ENCODE measurements at regions of chr1 and their contacts with region 1.

Region 1: DNA sequence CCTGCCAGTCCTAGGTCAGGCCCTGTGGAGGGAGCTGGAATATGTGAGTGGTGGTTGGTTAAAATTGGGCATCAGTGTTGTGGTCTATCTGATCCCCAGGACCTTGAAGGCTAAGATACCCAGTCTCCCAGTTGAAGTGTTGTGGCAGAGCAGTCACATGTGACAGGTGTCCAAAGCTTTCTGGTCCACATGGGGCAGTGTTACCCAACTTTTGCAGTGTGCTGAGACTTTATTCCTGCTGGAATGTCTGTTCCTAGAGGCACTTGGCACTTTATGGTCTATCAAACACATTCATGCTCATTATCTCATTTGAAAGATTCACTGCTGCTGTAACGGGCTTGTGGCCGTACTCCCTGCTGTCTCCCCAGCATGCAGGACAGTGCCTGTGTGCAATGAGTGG is 21.0 kb upstream of the LORICRIN start:
- DNase-seq: no peak
- H3K4me3 ChIP-seq: no peak overlapping the region
- H3K27ac ChIP-seq: no peak overlapping the region
- H3K4me1 ChIP-seq: peaks cover under 1 to 3% (median 2%) of the 10 kb centered on the region in 4 experiments
- H3K27me3 ChIP-seq: peaks cover 0 to 4% (median 0%) of the 10 kb centered on the region in 5 experiments

Region 2: GRCh38 chr1:153228491-153228890 is 10.0 kb before region 1 on chr1:
- CTCF ChIA-PET with region 1: interaction called, 12 read pairs
- POLR2A ChIA-PET with region 1: no interaction called
- DNase-seq: no peak
- H3K4me3 ChIP-seq: no peak overlapping the region
- H3K27ac ChIP-seq: no peak overlapping the region
- H3K4me1 ChIP-seq: peaks cover 7 to 22% (median 14%) of the 10 kb centered on the region in 4 experiments
- H3K27me3 ChIP-seq: peaks cover 0 to 2% (median 0%) of the 10 kb centered on the region in 5 experiments

Region 3: DNA sequence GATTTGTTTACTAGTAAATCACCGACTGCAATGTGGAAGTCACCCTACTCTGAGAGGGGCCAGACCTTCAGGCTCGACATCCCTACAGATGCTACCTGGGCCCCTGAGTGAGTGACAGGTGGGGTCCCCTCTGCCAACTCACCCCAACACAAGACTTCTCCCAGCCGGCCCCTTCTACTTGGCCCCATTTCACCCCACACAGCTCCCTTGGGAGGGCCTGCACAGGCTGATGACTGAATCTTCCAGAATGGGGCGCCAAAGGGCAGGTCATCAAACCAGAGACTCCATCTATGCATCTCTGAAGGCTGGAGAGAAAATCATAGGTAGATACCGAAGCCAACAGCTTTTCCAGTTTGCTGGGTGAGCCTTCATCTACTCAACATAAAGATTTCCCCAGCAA is 161.7 kb after region 1 on chr1:
- CTCF ChIA-PET with region 1: no interaction called
- POLR2A ChIA-PET with region 1: no interaction called
- DNase-seq: no peak
- H3K4me3 ChIP-seq: no peak overlapping the region
- H3K27ac ChIP-seq: no peak overlapping the region
- H3K4me1 ChIP-seq: peaks cover 0 to 3% (median 0%) of the 10 kb centered on the region in 4 experiments
- H3K27me3 ChIP-seq: peaks cover 0 to 3% (median 0%) of the 10 kb centered on the region in 5 experiments

Measured in common myeloid progenitor, CD34-positive (primary cell).